A549 (cell line): ENCODE measurements at regions of chr12 and their contacts with region 1.

Region 1: GRCh38 chr12:56636675-56637540 is 6.8 kb upstream of the BAZ2A start:
- DNase-seq: peak; percentile 99 to 100
- ATAC-seq: peak; percentile 63 to 77
- H3K4me3 ChIP-seq: peak overlapping the region; percentile 80
- H3K27ac ChIP-seq: peak overlapping the region; percentile 89 to 97
- H3K4me1 ChIP-seq: peaks cover 35% of the 10 kb centered on the region
- CTCF ChIP-seq: peak; percentile 77
- EP300 ChIP-seq: no peak
- POLR2A ChIP-seq: no peak
- RAD21 ChIP-seq: peak; percentile 74 to 75

Region 2: DNA sequence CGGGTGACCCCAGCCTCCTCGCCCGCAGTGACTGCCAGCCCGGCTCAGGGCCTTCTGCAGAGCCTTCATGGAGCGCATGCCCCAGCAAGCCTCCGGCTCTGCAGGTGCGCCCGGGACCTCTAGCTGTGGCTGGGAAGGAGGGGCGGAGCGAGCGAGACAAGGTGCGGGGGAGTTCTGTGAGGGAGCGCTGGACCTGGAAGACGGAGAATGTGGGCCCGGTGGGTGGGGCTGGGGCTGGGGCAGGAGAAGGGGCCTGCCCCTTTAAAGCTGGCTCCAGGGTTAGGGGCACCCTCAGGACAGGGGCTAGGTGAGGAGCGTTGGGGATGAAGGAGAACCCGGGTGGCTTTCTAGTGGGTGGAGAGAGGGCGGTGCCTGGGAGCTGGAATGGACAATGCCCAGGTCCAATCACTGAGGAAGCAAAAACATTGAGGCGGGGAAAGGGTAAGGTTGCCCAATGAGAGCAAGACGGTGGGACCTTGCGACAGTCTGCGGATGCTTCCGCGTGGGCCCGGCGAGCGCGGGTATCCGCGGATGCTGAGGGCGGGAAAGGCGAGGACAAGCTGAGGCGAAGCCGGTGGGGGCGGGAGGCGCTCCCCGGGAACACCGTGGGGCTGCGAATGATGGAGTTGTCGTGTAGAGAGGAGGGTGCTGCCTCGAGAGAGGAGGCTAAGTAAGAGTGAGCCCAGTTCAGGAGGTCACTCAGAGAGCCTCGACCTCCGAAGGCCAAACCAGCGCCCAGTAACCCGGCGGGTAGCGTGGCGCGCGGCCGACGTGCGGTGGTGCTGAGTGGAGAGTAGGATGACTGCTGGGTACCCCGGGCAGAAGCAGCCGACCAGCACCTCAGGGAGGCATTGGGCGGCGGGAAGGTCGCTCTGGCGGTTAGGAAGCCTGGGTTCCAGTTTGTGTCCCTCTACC is 148.6 kb before region 1 on chr12 and contains the start of gene GLS2:
- CTCF ChIA-PET with region 1: interaction called, 10 read pairs
- POLR2A ChIA-PET with region 1: no interaction called
- DNase-seq: peak; percentile 69 to 75
- ATAC-seq: peak; percentile 85 to 93
- H3K4me3 ChIP-seq: peak within 1 kb of the TSS; percentile 35
- H3K27ac ChIP-seq: peak within 1 kb of the TSS; percentile 8 to 19; a peak in 3 of 6 replicates
- H3K4me1 ChIP-seq: peaks cover 17% of the 10 kb centered on the region
- CTCF ChIP-seq: no peak
- EP300 ChIP-seq: no peak
- POLR2A ChIP-seq: peak; percentile 10; the same call in 1 of the 2 replicates
- RAD21 ChIP-seq: no peak
- polyA plus RNA-seq, gene GLS2: 0.36 and 0.61 TPM in 2 replicates

Region 3: DNA sequence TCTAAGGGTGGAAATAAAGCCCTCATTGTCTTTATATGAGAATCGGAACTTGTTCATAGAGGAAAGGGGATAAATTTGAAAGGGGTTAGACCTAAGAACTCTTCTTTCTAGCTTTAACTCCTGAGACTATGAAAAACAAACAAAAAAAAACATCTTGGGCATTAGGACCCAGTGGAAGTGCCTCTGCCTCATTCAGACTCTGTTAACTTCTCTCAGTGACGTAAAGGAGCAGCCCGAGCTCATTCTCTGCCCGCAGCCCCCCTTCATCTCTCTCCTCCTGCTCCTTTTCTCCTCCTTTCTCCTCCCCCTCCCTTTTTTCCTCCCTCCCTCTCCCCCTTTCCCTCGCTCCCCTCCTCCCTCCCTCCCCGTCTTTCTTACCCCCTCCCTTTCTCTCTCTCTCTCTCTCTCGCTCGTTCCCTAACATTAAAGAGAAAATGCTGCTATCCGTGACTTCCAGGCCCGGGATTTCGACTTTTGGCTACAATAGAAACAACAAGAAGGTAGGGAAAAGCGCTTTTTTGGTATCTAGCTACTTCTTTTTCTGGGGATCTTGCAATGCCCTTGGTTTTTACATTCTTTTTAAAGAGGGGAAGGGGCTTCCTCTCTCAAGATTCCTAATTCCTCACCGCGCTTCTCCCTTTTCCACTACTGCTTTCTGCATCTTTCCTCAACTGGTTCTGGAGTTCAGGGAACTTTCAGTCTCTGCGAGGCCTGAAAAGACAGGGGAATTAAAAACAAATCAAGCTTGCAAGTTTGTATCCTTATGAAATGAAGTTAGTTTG is 115.1 kb before region 1 on chr12 and contains the start of gene RBMS2:
- CTCF ChIA-PET with region 1: interaction called, 74 read pairs
- POLR2A ChIA-PET with region 1: interaction called, 6 read pairs
- DNase-seq: peak; percentile 81 to 96
- ATAC-seq: peak; percentile 91 to 95
- H3K4me3 ChIP-seq: peak within 1 kb of the TSS; percentile 66
- H3K27ac ChIP-seq: peak within 1 kb of the TSS; percentile 87 to 89
- H3K4me1 ChIP-seq: peaks cover 70% of the 10 kb centered on the region
- CTCF ChIP-seq: no peak
- EP300 ChIP-seq: no peak
- POLR2A ChIP-seq: no peak
- RAD21 ChIP-seq: no peak
- polyA plus RNA-seq, gene RBMS2: 46.4 and 61.6 TPM in 2 replicates

Region 4: DNA sequence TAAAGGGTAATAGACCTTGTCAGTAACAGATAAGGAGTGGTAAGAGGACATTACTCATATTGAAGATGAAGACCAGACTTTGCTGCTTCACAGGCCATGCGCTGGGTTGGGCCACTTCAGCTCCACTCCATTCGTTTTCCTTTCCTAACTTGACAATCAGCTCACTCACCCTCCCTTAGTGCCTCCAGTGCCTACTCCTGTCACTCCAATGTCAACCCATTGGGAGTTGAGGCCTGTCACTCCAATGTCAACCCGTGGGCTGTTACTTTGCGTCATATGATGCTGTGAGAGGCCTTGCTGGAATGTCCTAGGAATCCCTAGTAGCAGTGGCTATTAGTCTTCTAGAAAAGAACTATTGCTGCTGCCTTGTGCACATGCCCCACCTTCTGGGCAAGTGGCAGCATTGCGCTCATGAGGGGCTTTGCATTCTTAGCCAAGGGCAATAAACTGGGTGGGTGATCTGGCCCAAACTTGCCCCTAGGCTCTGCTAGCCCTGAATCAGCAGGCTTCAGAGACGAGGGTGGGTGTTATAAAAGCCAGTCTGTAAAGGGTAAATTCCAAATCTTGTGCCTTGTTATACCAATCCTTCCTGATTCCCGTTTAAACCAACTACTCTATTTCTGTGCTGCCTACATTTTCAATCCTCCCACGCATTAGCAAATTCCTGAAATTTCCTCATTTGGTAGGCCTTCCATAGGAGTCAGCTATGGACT is 42.8 kb before region 1 on chr12:
- CTCF ChIA-PET with region 1: interaction called, 24 read pairs
- POLR2A ChIA-PET with region 1: interaction called, 4 read pairs
- DNase-seq: peak; percentile 75 to 78
- ATAC-seq: peak; percentile 71 to 82
- H3K4me3 ChIP-seq: no peak overlapping the region
- H3K27ac ChIP-seq: no peak overlapping the region
- H3K4me1 ChIP-seq: 0 out of 3 replicates have a peak, but pooled peaks cover 4% of the 10 kb centered on the region
- CTCF ChIP-seq: peak; percentile 79
- EP300 ChIP-seq: no peak
- POLR2A ChIP-seq: no peak
- RAD21 ChIP-seq: peak; percentile 68 to 85

Region 5: GRCh38 chr12:56616925-56617324 is 20.0 kb before region 1 on chr12:
- CTCF ChIA-PET with region 1: interaction called, 67 read pairs
- POLR2A ChIA-PET with region 1: interaction called, 4 read pairs
- DNase-seq: no peak
- ATAC-seq: no peak
- H3K4me3 ChIP-seq: no peak overlapping the region
- H3K27ac ChIP-seq: no peak overlapping the region
- H3K4me1 ChIP-seq: no peaks in the 10 kb centered on the region
- CTCF ChIP-seq: no peak
- EP300 ChIP-seq: no peak
- POLR2A ChIP-seq: no peak
- RAD21 ChIP-seq: no peak

Region 6: DNA sequence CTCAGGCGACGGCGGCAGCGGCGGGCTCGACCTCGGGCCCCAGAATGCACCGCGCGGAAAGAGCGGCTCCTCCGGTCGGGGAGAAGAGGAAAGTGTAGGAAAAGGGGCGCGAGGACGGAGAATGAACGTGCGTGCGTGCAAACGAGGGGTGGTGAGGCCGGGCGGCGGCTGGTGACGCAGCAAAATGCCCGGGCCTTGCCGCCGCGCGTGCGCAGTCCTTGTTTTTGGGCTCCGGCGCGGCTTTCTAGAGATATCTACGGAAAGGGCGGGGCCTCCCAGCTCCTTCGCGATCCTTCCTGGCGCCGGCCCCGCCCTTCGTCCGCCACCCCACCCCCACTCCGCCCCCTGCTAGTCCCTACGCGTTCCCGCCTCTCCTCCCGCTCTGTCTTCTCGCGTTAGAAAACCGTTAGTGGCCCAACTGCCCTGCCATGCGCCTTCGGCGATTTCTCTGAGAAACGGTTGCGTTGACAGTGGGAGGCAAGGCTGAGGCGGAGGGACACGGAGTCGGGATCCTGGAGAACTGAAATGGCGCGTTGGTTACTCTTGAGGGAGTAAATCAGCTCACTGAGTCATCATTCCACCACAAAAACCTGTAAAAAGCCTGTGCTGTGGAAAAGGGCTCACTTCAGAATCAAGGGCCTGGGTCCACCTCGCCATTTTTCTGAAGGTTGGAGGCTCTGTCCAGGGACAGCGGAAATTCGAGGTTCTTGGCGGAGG is 51.4 kb after region 1 on chr12 and contains the start of gene PTGES3:
- CTCF ChIA-PET with region 1: interaction called, 12 read pairs
- POLR2A ChIA-PET with region 1: interaction called, 57 read pairs
- DNase-seq: peak; percentile 95 to 99
- ATAC-seq: peak; percentile 87 to 92
- H3K4me3 ChIP-seq: peak within 1 kb of the TSS; percentile 82
- H3K27ac ChIP-seq: peak within 1 kb of the TSS; percentile 97 to 98
- H3K4me1 ChIP-seq: peaks cover 18% of the 10 kb centered on the region; the same call in 2 of the 3 replicates
- CTCF ChIP-seq: no peak
- EP300 ChIP-seq: no peak
- POLR2A ChIP-seq: peak; percentile 84; the same call in 1 of the 2 replicates
- RAD21 ChIP-seq: no peak
- polyA plus RNA-seq, gene PTGES3: 211 and 272 TPM in 2 replicates

Region 7: DNA sequence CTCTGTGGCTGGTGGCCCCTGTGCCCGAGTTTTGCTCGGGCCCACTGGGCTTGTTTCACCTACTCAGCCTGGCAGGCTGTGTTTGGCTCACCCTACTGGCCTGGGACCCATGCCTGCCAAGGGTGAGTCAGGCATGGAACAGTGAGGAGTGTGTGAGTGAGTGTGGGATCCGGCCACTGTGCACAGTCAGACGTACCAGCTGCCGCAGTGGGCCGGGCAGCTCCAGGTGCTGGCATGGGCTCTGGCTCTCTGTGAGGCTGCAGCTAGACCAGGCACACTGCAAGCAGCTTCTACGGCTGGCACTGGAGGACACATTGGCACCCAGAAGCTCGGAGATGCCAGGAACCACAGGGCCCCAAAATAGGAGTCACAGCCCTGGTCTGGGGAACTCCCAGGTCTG is 166.8 kb after region 1 on chr12:
- CTCF ChIA-PET with region 1: no interaction called
- POLR2A ChIA-PET with region 1: no interaction called
- DNase-seq: no peak
- ATAC-seq: peak; percentile 54 to 60; a peak in 4 of 6 replicates
- H3K4me3 ChIP-seq: no peak overlapping the region
- H3K27ac ChIP-seq: peak overlapping the region in 1 of 2 experiments; percentile 49; a peak in 2 of 6 replicates
- H3K4me1 ChIP-seq: peaks cover 19% of the 10 kb centered on the region
- CTCF ChIP-seq: no peak
- EP300 ChIP-seq: no peak
- POLR2A ChIP-seq: no peak
- RAD21 ChIP-seq: no peak

Region 8: DNA sequence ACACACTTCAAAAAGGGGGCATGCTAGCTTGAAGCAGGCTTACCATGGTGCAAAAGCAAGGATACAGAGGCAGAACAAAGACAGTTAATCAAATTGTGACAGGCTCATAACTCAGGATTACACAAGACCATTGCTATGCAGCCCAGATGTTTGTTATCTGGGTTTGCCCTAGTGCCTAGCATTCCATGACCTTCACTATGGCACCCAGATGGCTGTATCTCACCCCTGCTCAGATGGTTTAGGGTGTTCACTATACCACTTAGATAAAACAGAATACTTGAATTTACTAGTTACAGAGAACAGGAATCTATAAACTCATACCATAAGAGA is 241.1 kb after region 1 on chr12:
- CTCF ChIA-PET with region 1: no interaction called
- POLR2A ChIA-PET with region 1: no interaction called
- DNase-seq: peak in 1 of 2 experiments; percentile 69
- ATAC-seq: peak; percentile 68 to 89; a peak in 5 of 6 replicates
- H3K4me3 ChIP-seq: no peak overlapping the region
- H3K27ac ChIP-seq: peak overlapping the region; percentile 31 to 41; a peak in 5 of 6 replicates
- H3K4me1 ChIP-seq: peaks cover 38% of the 10 kb centered on the region
- CTCF ChIP-seq: no peak
- EP300 ChIP-seq: no peak
- POLR2A ChIP-seq: no peak
- RAD21 ChIP-seq: no peak